Tibial artery (tissue), 4 donors: ENCODE measurements at regions of chr11 and their contacts with region 1.

Region 1: DNA sequence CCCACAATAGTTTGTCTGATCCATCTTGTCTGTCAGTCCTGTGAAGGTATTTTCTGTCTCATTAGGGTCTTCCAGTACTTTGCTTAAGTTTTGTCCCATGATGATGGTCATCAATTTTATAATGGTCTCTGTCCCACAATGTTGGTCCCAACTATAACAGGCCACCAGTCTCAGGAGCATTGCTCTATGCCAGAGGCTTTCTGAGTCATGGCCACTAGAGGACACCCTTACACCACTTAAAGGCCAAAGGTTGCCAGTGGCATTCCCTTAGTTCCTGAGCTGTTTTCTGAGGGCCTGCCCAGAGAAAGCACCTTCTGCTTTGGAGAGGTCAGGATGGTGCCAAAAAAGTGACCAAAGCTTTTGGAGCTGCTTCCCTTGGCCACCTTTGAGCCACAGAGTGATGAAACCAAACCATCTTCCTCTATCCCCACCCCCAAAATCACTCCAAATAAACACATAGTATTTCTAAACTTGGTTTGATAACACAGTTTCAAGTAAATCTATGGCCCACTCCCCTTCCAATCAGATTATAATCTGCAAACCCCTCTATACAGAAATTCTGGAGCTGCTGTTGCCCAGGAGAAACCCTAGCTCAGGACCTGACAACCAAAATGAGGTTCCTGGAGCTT is 19.3 kb downstream of the EIF3F start:
- DNase-seq: no peak
- H3K4me3 ChIP-seq: no peak overlapping the region
- H3K27ac ChIP-seq: no peak overlapping the region
- H3K4me1 ChIP-seq: no peaks in the 10 kb centered on the region
- H3K27me3 ChIP-seq: peaks cover 0 to 7% of the 10 kb centered on the region in 2 donors
- CTCF ChIP-seq: peak; percentile 67 to 70

Region 2: DNA sequence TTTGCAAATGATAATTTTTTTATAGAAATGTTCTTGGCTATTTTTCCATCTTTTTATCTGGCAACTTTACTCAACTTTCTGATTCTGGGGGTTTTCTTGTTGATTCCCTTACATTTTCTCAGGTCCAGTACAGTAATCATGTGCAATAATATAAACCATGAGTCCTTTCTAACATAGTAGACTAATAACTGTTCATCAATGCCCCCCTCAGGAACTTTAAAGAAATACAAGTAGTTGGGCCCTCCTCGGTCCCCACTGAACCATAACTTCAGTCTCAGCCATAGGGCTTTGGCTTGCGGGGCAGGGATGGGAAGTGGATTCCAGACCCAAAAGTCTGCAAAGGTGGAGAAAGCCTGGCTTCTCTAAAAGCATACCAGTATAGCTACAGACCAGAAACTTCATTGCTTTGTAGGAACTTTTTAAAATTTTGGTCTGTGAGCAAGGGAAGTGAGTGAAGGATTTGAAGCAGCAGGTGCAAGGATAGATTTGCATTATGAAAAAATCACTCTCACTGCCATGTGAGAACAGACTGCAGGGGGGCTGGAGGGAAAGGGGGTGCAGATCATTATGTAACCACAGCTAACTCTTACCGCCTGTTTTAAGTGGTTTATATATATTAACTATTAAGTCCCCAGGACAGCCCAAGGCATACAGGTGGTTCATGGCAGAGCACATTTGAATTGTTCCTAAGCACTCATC is 64.1 kb after region 1 on chr11:
- intact Hi-C with region 1: no loop called
- DNase-seq: peak in 1 of 2 donors; percentile 20
- H3K4me3 ChIP-seq: no peak overlapping the region
- H3K27ac ChIP-seq: no peak overlapping the region
- H3K4me1 ChIP-seq: peaks cover 0 to 16% (median 9%) of the 10 kb centered on the region in 4 donors
- H3K27me3 ChIP-seq: no peaks in the 10 kb centered on the region
- CTCF ChIP-seq: peak in 1 of 2 experiments; percentile 10

Region 3: DNA sequence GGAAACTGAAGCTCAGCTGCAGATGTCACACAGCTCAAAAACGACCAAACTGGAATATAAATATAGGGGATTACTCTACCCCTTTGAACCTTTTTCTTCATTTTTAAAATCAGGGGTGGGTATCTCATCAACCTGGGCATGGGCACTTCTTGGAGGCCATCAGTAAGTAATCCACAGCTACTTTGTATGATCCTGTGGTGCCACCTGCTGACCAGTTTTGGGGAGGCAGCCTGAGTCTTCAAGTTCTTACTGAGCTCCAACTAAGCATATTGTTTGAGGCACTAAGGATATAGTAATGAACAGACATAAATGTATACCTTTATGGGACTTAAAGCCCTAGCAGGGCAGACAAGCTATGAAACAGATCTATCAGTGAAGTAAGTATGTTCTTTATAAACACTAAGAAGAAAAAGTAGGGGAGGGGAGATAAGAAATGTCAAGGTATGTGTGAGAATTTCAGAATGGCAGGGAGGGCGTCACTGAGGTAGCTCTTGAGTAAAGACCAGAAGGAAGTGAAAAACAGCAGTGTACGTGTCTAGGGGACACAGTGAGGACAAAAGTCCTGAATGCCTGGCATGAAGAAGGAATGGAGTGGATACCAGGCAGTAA is 92.9 kb after region 1 on chr11:
- intact Hi-C with region 1: loop called (anchors 5 kb)
- DNase-seq: peak; percentile 84
- H3K4me3 ChIP-seq: no peak overlapping the region
- H3K27ac ChIP-seq: no peak overlapping the region
- H3K4me1 ChIP-seq: no peaks in the 10 kb centered on the region
- H3K27me3 ChIP-seq: no peaks in the 10 kb centered on the region
- CTCF ChIP-seq: peak; percentile 74 to 79